ENCODE measurements at regions of chrX and their contacts with region 1.

Region 1: GRCh38 chrX:118495061-118495921 is at the start of gene DOCK11:
- DNase-seq: peak; percentile 86
- H3K4me3 Mint-ChIP-seq: peak within 1 kb of the TSS; percentile 97
- H3K27ac Mint-ChIP-seq: peak within 1 kb of the TSS; percentile 96
- H3K4me1 Mint-ChIP-seq: peaks cover 17% of the 10 kb centered on the region
- H3K27me3 Mint-ChIP-seq: no peaks in the 10 kb centered on the region
- total RNA-seq, gene DOCK11: 32.8 to 34.8 TPM

Region 2: DNA sequence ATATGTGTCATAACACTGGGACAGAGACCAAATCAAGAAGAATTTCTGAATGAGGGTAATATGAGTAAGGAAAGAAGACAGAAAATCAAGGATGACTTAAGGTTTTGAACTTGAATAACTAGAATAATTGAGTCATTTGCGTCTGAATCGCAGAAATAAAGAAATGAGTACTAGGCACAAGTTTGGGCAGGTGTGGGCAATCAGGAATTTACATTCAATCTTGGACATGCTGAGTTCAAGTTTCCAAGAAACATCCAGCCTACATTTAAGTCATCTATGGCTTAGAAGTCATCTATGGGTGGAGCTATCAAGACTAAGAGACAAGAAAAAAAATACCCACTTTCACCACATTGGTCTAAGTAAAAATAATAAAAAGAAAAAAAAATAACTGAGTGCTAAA is 179.8 kb before region 1 on chrX:
- CTCF ChIA-PET with region 1: no interaction called
- intact Hi-C with region 1: no loop called
- DNase-seq: no peak
- H3K4me3 Mint-ChIP-seq: no peak overlapping the region
- H3K27ac Mint-ChIP-seq: no peak overlapping the region
- H3K4me1 Mint-ChIP-seq: no peaks in the 10 kb centered on the region
- H3K27me3 Mint-ChIP-seq: peaks cover 3% of the 10 kb centered on the region

Region 3: DNA sequence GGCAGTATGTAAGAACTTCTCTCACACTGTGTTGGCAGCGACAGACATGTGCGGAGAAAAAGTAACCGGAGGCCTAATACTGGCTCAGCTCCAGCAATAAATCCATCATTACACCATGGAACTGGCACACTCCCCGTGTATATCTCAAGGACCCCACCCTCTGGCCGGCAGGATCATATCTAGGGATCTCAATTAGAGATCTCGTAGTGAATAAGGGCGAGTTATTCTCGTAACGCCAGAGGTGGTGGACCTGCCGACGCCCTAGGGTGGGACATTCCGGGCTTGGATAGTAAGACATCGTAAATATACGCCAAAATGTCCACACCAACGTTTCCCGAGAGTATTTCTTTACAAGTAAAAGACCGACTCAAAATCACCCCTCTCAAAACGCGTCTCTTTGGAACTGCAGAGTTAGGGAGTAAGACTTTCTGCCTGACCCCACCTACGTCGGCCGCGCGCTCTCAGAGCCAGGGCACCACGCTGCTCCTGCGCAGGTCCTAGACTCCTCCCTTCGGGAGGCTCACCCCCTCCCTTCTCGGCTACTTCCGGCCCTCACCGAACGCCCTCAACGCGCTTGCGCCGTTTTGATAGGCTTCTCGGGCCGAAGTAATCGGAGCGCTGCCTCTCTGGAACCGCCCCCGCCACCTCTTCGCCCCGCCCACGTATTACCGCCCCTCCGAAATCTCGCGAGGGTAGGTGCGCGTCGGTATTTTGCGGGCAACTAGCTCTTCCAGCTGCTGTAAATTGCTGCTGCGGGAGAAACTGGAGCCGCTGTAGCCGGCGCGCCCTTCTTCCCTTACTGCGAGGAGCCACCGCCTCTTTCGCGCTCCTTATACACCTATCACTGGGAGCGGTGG is 149.7 kb before region 1 on chrX and contains the start of gene WDR44:
- CTCF ChIA-PET with region 1: no interaction called
- intact Hi-C with region 1: loop called (anchors 1 kb)
- DNase-seq: peak; percentile 94
- H3K4me3 Mint-ChIP-seq: peak within 1 kb of the TSS; percentile 97
- H3K27ac Mint-ChIP-seq: peak within 1 kb of the TSS; percentile 95
- H3K4me1 Mint-ChIP-seq: peaks cover 30% of the 10 kb centered on the region
- H3K27me3 Mint-ChIP-seq: no peaks in the 10 kb centered on the region
- total RNA-seq, gene WDR44: 4.0 to 5.4 TPM

Region 4: GRCh38 chrX:118420462-118420861 is 74.8 kb before region 1 on chrX:
- CTCF ChIA-PET with region 1: no interaction called
- intact Hi-C with region 1: no loop called
- DNase-seq: no peak
- H3K4me3 Mint-ChIP-seq: no peak overlapping the region
- H3K27ac Mint-ChIP-seq: peak overlapping the region; percentile 54
- H3K4me1 Mint-ChIP-seq: peaks cover 10% of the 10 kb centered on the region
- H3K27me3 Mint-ChIP-seq: no peaks in the 10 kb centered on the region

Region 5: GRCh38 chrX:118459494-118459893 is 35.8 kb before region 1 on chrX:
- CTCF ChIA-PET with region 1: no interaction called
- intact Hi-C with region 1: no loop called
- DNase-seq: peak; percentile 37
- H3K4me3 Mint-ChIP-seq: no peak overlapping the region
- H3K27ac Mint-ChIP-seq: no peak overlapping the region
- H3K4me1 Mint-ChIP-seq: no peaks in the 10 kb centered on the region
- H3K27me3 Mint-ChIP-seq: no peaks in the 10 kb centered on the region

Region 6: GRCh38 chrX:118474586-118474985 is 20.7 kb before region 1 on chrX:
- CTCF ChIA-PET with region 1: no interaction called
- intact Hi-C with region 1: no loop called
- DNase-seq: no peak
- H3K4me3 Mint-ChIP-seq: no peak overlapping the region
- H3K27ac Mint-ChIP-seq: no peak overlapping the region
- H3K4me1 Mint-ChIP-seq: no peaks in the 10 kb centered on the region
- H3K27me3 Mint-ChIP-seq: no peaks in the 10 kb centered on the region

Region 7: DNA sequence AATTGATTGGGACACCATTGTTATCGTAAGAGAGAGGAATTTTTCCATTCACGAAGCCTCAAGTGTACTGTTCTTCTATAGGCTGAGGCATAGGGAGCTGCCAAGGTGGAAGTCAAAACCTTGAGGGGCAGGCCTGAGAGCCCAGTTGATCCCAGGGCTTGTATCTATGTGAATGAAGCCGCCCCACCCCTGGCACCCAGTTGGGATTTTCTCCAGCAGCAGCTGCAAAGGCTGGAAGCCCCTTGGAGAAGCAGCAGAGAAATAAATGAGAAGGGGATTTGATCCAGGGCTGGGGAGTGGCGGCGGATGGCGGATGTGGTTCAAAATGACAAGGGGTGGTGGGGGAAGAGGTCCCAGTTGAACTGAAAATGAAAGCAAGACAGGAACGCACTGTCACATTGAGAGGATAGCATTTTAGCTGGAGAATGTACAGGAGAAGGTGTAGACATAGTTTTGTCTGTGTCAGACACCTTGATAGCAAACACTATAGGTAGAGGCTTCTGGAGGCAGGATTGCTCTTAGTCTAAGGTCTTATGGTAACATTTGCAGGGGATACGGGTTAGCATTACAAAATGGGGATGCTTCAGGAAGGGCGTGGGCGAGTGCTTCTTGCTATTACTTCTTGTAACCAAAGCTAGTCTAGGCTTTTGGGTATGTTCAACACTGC is 32.9 kb after region 1 on chrX:
- CTCF ChIA-PET with region 1: interaction called, 4 read pairs
- intact Hi-C with region 1: loop called (anchors 1 kb)
- DNase-seq: peak; percentile 73
- H3K4me3 Mint-ChIP-seq: peak overlapping the region; percentile 79
- H3K27ac Mint-ChIP-seq: peak overlapping the region; percentile 96
- H3K4me1 Mint-ChIP-seq: peaks cover 73% of the 10 kb centered on the region
- H3K27me3 Mint-ChIP-seq: no peaks in the 10 kb centered on the region

Region 8: GRCh38 chrX:118560489-118560888 is 65.2 kb after region 1 on chrX:
- CTCF ChIA-PET with region 1: no interaction called
- intact Hi-C with region 1: loop called (anchors 2 kb)
- DNase-seq: no peak
- H3K4me3 Mint-ChIP-seq: no peak overlapping the region
- H3K27ac Mint-ChIP-seq: peak overlapping the region; percentile 51
- H3K4me1 Mint-ChIP-seq: peaks cover 53% of the 10 kb centered on the region
- H3K27me3 Mint-ChIP-seq: no peaks in the 10 kb centered on the region

Region 9: DNA sequence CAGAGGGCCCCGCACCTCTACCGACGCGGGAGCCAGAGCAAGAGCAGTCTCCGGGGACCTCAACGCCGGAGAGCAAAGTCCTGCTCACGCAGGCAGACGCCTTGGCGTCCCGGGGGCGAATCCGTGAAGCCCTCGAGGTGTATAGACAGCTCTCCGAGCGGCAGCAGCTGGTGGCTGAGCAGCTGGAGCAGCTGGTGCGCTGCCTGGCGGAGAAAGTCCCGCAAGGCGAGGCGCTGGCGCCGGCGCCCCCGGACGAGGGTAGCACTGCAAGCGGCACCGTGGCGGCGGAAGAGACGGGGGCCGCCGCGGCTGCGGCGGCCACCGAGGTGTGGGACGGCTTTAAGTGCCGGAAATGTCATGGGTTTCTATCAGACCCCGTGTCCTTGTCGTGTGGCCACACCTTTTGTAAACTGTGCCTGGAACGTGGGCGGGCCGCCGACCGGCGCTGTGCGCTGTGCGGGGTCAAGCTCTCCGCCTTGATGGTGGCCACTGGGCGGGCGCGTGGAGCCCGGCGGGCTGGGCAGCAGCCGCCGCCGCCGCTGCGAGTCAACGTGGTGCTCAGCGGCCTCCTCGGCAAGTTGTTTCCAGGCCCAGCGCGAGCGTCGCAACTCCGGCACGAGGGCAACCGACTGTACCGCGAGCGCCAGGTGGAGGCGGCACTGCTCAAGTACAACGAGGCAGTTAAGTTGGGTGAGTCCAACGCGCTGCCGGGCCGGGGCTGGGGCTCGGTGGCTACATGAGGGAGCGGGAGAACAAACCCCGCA is 479.8 kb after region 1 on chrX:
- CTCF ChIA-PET with region 1: no interaction called
- intact Hi-C with region 1: loop called (anchors 5 kb)
- DNase-seq: peak; percentile 59
- H3K4me3 Mint-ChIP-seq: peak overlapping the region; percentile 83
- H3K27ac Mint-ChIP-seq: peak overlapping the region; percentile 88
- H3K4me1 Mint-ChIP-seq: peaks cover 12% of the 10 kb centered on the region
- H3K27me3 Mint-ChIP-seq: peaks cover 6% of the 10 kb centered on the region